ENCODE measurements at regions of chr5 and their contacts with region 1.

Region 1: DNA sequence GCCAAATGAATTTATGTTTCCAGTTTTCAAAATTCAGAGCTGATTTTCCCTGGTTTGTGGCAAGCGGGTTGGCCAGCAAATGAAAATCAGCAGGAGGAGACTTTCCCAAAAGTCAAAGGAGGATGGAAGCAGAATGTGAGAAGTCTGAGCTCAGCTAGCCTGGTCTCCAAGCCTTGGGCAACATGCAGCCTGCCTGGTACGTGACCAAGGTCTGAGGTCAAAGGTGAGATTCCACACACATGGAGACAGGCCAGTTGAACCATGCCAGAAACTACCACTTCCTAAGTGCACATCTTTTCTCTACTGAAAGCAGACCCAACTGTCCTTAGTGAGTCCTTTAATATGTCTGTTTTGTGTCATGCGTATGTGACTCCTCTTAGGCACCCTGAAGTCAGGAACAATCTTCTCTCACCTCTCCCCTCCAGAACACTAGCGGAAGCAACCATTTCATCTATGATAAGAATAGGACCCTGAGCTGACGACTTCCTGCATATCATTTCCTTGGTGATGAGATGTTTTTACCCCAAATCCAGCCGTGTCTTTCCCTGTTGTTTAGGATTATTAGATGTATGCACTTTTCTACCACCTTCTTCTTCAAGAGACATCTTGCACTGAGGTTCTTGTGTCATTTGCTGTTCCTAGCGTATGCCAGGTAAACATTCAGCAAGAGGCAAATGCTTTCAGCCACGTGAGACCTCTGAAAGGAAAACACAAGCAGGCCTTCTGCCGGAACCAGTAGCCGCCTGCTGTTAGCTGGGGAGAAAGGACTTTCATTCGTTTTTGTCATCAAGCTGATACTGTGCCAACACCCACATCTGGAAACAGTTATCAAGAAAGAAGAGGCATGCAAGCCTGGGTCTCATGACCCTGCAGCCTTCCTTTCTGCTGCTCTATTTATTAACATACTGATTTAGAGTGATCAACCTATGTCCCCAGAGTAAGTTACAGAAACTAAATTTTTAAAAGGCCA is 9.7 kb upstream of the TGFBI start:
- DNase-seq: peak in 1 of 2 donors; percentile 79
- H3K4me3 ChIP-seq: no peak overlapping the region
- H3K27ac ChIP-seq: peak overlapping the region in 1 of 2 donors; percentile 24
- H3K4me1 ChIP-seq: peaks cover 9 to 34% of the 10 kb centered on the region in 2 donors
- H3K27me3 ChIP-seq: no peaks in the 10 kb centered on the region
- CTCF ChIP-seq: peak in 1 of 3 experiments; percentile 13

Region 2: DNA sequence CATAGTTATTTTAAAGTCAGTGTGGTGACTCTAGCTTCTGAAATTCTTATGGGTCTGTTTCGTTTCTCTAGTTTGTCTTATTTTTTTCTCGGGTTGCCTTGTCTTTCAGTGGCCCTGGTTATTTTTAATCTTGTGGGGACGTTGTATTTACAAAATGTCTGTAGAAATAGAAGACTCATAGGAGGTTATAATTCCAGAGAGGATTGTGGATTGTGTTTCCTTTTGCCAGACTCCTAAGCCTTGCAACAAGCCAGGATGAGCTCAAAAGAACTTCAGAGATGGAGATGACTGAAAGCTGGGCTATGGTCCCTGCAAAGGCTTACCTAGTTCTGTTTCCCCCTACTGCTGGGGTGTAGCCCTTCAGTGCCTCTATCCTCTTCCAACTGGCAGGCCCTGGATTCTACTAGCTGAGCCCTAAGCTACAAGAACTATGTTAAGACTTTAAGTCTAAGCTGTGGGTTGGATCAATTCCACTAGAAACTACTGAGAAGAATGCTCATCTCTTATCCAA is 32.2 kb before region 1 on chr5:
- intact Hi-C with region 1: loop called (anchors 2 kb)
- DNase-seq: no peak
- H3K4me3 ChIP-seq: no peak overlapping the region
- H3K27ac ChIP-seq: peak overlapping the region; percentile 56 to 80
- H3K4me1 ChIP-seq: peaks cover 0 to 16% of the 10 kb centered on the region in 2 donors
- H3K27me3 ChIP-seq: no peaks in the 10 kb centered on the region
- CTCF ChIP-seq: no peak